Activated CD4-positive, alpha-beta memory T cell treated with anti-CD3 and anti-CD28 coated beads for 36 hours (primary cell): ENCODE measurements at regions of chr12 and their contacts with region 1.

Region 1: DNA sequence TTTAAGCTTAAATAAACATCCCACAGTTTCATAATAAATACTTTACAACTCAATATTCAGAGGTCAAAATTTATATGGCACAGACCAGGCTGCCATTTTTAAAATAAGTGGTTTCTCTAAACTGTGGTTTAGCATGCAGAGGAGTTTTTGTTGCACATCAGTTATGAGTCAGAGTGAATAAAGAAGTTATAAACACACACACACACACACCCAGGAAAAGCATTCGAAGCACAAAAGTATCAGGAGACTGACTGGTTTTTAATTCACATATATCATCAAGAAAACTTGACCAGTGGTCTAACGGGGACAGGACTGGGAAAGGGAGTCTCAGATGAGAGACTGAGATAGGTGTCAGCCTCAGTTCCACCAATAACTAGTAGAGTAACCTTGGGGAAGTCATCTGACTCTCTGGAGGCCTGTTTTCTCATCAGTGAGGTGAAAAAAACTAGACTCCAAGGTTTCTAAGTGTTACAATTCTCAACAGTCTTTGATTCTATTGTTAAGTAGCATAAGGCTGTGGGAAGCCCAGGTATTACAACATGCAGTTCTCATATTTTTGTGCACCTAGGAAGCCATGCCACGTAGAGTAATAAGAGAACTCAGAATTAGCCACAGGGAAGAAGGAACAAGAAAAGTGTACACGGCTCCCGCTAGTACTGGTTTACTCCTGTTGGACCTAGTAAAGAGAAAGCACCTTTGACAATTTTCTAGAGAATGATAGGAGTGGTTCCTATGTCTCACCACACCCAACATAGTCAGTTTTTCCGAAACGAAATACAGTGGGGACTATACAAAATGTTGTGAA is 5.2 kb downstream of the PPTC7 start:
- DNase-seq: peak; percentile 64
- H3K4me3 Mint-ChIP-seq: peak overlapping the region; percentile 94
- H3K27ac Mint-ChIP-seq: peak overlapping the region; percentile 98
- H3K4me1 Mint-ChIP-seq: peaks cover 77% of the 10 kb centered on the region
- H3K27me3 Mint-ChIP-seq: no peaks in the 10 kb centered on the region

Region 2: DNA sequence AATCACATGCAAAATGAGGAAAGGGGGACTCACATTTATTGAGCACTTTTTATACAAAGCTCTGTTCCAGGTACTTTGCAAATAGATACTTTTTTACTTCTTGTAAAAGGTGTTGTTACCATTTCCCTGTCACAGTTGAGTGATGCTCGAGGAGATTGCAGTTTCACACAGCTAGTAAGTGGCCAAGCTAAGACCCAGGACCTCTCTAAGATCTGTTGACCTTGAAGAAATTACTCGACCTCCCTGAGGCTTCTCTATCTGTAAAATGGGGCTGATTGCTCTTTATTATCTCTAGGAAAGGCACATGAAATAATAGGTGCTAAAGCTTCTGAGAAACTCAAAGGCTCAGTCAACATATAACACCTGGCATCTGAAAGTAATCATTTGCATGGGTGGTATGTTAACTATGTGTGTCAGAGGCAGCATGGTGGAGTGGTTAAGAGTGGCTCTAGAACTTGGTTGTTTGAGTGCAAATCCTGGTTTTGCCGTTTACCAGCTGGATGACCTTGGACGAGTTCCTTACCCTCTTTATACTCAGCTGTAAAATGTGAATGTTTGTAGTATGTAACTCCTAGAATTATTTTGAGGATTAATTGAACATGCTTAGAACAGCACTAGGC is 412.3 kb before region 1 on chr12:
- CTCF ChIA-PET with region 1: no interaction called
- POLR2A ChIA-PET with region 1: no interaction called
- intact Hi-C with region 1: no loop called
- DNase-seq: no peak
- H3K4me3 Mint-ChIP-seq: no peak overlapping the region
- H3K27ac Mint-ChIP-seq: no peak overlapping the region
- H3K4me1 Mint-ChIP-seq: no peaks in the 10 kb centered on the region
- H3K27me3 Mint-ChIP-seq: no peaks in the 10 kb centered on the region

Region 3: DNA sequence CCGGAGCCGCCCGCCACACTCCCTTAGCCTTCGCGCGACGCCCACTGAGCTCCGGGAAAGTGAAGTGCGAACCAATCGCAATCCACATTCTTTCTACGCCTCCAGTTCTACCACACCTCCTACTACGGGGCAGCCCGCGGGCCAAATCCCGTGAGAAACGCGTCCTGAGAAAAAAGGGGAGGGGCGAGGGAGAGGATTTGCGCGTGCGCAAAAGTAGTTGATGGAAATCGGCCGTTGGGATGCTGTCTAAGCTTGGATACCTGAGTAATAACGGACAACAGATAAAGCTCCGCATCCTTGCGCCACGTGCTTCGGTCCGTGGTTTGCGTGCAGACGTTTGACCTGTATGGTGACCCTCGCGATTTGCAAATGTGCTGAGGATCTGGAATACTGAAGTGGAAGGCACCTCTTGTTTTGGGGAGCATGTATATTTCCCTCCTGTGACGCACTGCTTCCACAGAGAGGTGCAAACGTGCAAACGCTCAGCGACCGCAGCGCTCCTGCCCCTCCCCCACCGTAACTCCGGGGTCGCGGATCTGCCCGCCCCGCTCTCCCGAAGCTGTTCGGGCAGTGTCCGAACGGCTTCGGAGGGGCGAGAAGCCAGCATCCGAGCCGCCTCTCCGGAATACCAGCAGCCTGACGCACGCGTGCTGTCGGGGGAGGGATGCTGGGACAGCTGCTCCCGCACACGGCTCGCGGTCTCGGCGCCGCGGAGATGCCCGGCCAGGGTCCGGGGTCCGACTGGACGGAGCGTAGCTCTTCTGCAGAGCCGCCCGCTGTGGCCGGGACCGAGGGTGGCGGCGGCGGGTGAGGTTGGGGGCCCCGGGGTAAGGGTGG is 109.5 kb before region 1 on chr12 and contains the starts of genes FAM216A and GPN3:
- CTCF ChIA-PET with region 1: interaction called, 4 read pairs
- POLR2A ChIA-PET with region 1: interaction called, 15 read pairs
- intact Hi-C with region 1: loop called (anchors 1 kb)
- DNase-seq: peak; percentile 98
- H3K4me3 Mint-ChIP-seq: peak within 1 kb of the TSS; percentile 98
- H3K27ac Mint-ChIP-seq: peak within 1 kb of the TSS; percentile 97
- H3K4me1 Mint-ChIP-seq: peaks cover 28% of the 10 kb centered on the region
- H3K27me3 Mint-ChIP-seq: no peaks in the 10 kb centered on the region
- total RNA-seq, gene FAM216A: 29.8 to 30.0 TPM
- total RNA-seq, gene GPN3: 62.4 to 68.4 TPM

Region 4: GRCh38 chr12:110563702-110564640 is 13.9 kb before region 1 on chr12:
- CTCF ChIA-PET with region 1: interaction called, 6 read pairs
- POLR2A ChIA-PET with region 1: interaction called, 4 read pairs
- intact Hi-C with region 1: loop called (anchors 1 kb)
- DNase-seq: no peak
- H3K4me3 Mint-ChIP-seq: no peak overlapping the region
- H3K27ac Mint-ChIP-seq: peak overlapping the region; percentile 83
- H3K4me1 Mint-ChIP-seq: peaks cover 64% of the 10 kb centered on the region
- H3K27me3 Mint-ChIP-seq: no peaks in the 10 kb centered on the region

Region 5: DNA sequence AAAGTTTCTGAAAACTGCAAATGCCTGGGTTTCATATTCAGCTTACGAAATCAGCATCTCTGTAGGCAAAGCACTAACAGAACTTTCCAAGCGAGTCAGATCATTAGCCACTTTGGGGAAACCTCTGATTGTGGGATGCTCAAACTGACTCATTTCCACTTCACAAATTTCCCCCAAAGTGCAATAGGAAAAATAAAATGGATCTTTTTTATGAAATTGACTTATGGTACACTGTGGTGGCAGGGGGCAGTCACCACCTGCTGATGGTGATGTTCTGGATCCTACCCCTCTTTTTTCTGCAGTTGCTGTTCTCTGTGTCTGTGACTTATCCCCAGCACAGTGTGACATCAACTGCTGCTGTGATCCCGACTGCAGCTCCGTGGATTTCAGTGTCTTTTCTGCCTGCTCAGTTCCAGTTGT is 41.6 kb after region 1 on chr12:
- CTCF ChIA-PET with region 1: interaction called, 5 read pairs
- POLR2A ChIA-PET with region 1: no interaction called
- intact Hi-C with region 1: loop called (anchors 1 kb)
- DNase-seq: peak; percentile 69
- H3K4me3 Mint-ChIP-seq: no peak overlapping the region
- H3K27ac Mint-ChIP-seq: peak overlapping the region; percentile 71
- H3K4me1 Mint-ChIP-seq: peaks cover 15% of the 10 kb centered on the region
- H3K27me3 Mint-ChIP-seq: no peaks in the 10 kb centered on the region

Region 6: DNA sequence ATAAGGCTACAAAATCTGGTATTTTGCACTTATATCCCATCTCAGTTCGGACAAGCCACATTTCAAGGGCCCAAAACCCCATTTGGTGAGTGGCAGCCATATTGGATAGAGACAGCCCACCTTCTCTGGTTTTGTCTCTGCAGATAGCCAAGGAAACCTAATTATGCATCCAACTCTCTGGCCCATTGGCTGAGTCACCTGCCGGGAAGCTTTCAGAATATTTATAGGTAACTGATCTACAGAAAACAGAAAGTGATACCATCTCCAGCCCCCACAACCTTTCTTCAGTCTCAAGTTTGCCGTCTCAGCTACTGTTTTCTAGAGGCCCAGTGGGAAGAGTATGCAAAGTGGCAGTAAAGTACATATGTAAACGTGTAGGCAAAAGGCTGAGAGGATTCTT is 198.5 kb after region 1 on chr12:
- CTCF ChIA-PET with region 1: no interaction called
- POLR2A ChIA-PET with region 1: interaction called, 3 read pairs
- intact Hi-C with region 1: loop called (anchors 1 kb)
- DNase-seq: peak; percentile 84
- H3K4me3 Mint-ChIP-seq: peak overlapping the region; percentile 34
- H3K27ac Mint-ChIP-seq: peak overlapping the region; percentile 94
- H3K4me1 Mint-ChIP-seq: peaks cover 69% of the 10 kb centered on the region
- H3K27me3 Mint-ChIP-seq: no peaks in the 10 kb centered on the region